MCF 10A (cell line): ENCODE measurements at regions of chr7 and their contacts with region 1.

Region 1: DNA sequence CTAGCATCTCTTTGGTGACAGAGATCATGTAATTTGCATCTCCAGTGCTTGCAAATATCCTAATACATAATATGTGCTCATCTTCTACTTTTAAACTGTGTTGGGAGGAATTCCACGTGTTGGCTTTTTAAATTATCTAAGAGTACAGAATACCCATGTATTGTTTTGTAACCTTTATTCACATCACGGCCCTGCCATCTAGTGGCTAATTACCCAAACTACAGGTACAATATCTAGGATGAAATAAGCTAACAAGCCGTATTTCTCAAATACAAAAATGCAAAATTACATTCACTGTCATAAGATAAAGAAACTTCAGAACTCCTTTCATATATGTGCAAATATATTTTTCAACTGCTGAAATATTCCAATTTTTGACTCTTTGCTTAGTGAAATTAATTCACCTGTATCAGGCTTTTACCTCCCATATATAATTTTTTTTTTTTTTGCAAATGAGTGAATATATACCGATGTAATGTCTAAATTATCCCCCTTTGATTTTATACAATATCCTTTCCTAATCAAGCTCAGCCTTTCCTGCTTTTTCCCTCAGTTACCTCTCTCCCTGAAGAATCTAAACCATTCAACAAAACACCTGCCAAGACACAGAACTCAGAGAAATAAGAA is 30.3 kb upstream of the LSM8 start:
- DNase-seq: peak; percentile 59
- H3K4me3 Mint-ChIP-seq: no peak overlapping the region
- H3K27ac Mint-ChIP-seq: no peak overlapping the region
- H3K4me1 Mint-ChIP-seq: peaks cover 10% of the 10 kb centered on the region
- H3K27me3 Mint-ChIP-seq: peaks cover 18% of the 10 kb centered on the region
- CTCF ChIP-seq: peak; percentile 72

Region 2: DNA sequence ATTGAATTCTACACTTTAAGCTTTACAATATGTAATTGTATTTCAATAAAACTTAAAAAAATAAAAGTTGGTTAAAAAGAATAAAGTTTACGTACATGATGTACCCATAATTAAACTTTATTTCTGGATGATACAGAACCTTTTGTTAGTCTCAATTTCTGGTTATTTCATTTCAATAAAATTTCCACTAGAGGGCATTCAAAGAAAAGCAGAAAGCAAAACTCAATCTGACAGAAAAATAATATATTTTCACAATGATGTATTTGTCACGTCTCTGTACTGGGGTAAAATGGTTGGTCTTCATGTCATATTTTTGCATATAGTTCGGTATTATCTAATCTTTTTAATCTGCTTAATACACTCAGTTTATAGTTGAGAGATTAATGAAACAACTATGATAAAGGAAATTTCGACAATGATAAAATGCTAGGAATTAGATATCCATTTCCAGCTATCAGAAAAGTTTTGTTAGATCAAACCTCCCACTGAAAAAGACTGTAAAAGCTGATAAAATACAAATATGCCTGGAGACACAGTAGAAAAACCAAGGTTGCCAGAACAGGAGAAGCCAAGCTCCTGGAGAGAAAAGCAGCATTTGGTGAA is 753.7 kb before region 1 on chr7:
- CTCF ChIA-PET with region 1: interaction called, 4 read pairs
- POLR2A ChIA-PET with region 1: interaction called, 4 read pairs
- intact Hi-C with region 1: loop called (anchors 2 kb)
- DNase-seq: no peak
- H3K4me3 Mint-ChIP-seq: no peak overlapping the region
- H3K27ac Mint-ChIP-seq: no peak overlapping the region
- H3K4me1 Mint-ChIP-seq: no peaks in the 10 kb centered on the region
- H3K27me3 Mint-ChIP-seq: peaks cover 55% of the 10 kb centered on the region
- CTCF ChIP-seq: peak; percentile 40

Region 3: GRCh38 chr7:117673839-117674238 is 479.8 kb before region 1 on chr7:
- CTCF ChIA-PET with region 1: no interaction called
- POLR2A ChIA-PET with region 1: no interaction called
- intact Hi-C with region 1: loop called (anchors 5 kb)
- DNase-seq: peak; percentile 37
- H3K4me3 Mint-ChIP-seq: no peak overlapping the region
- H3K27ac Mint-ChIP-seq: no peak overlapping the region
- H3K4me1 Mint-ChIP-seq: no peaks in the 10 kb centered on the region
- H3K27me3 Mint-ChIP-seq: peaks cover 39% of the 10 kb centered on the region
- CTCF ChIP-seq: peak; percentile 21

Region 4: DNA sequence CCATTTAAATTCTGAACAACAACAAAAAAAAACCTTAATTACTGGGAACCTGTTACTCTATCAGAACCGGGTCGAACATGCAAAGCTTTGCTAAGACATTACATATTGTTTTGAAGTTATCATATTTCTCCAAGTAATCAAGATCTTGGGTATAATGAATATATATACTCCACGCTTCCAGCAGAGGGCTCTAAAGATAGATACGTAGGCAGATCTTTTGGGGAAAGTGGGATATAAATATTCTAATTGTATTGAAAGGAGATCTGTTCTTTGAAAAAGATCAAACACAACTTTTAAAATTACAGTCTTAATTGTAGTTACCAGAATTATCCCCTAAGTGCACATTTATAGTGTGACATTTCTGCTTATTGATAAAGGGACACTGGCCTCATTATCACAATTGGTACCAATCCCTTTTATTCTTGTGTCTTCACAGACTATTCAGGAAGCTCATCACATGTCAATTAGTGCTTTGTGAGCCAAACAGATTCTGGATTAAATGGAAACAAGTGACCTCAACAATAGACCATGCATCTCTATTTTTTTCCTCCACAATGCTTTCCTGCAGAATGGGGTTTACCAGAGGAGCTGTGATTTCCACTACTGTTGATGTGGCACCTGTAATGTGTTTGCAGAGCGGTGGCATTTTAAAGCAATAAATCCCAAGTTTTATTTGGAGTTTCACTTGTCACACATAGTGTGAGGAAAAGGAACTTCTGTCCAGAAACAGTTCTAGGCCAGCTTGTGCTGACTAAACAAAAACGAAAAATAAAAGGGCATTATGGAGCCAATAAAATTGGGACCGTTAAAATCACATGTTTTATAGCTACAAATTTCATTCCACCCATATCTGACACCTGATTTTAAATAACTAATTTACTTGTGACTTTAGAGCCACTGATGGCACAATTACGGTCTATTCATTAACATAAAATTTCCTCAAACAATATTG is 402.8 kb before region 1 on chr7:
- CTCF ChIA-PET with region 1: interaction called, 21 read pairs
- POLR2A ChIA-PET with region 1: no interaction called
- intact Hi-C with region 1: loop called (anchors 1 kb)
- DNase-seq: peak; percentile 39
- H3K4me3 Mint-ChIP-seq: no peak overlapping the region
- H3K27ac Mint-ChIP-seq: no peak overlapping the region
- H3K4me1 Mint-ChIP-seq: no peaks in the 10 kb centered on the region
- H3K27me3 Mint-ChIP-seq: no peaks in the 10 kb centered on the region
- CTCF ChIP-seq: peak; percentile 64

Region 5: GRCh38 chr7:118104812-118105441 is 48.7 kb before region 1 on chr7:
- CTCF ChIA-PET with region 1: interaction called, 3 read pairs
- POLR2A ChIA-PET with region 1: no interaction called
- intact Hi-C with region 1: loop called (anchors 2 kb)
- DNase-seq: peak; percentile 44
- H3K4me3 Mint-ChIP-seq: no peak overlapping the region
- H3K27ac Mint-ChIP-seq: no peak overlapping the region
- H3K4me1 Mint-ChIP-seq: no peaks in the 10 kb centered on the region
- H3K27me3 Mint-ChIP-seq: no peaks in the 10 kb centered on the region
- CTCF ChIP-seq: peak; percentile 67